ENCODE measurements at regions of chr21 and their contacts with region 1.

Region 1: DNA sequence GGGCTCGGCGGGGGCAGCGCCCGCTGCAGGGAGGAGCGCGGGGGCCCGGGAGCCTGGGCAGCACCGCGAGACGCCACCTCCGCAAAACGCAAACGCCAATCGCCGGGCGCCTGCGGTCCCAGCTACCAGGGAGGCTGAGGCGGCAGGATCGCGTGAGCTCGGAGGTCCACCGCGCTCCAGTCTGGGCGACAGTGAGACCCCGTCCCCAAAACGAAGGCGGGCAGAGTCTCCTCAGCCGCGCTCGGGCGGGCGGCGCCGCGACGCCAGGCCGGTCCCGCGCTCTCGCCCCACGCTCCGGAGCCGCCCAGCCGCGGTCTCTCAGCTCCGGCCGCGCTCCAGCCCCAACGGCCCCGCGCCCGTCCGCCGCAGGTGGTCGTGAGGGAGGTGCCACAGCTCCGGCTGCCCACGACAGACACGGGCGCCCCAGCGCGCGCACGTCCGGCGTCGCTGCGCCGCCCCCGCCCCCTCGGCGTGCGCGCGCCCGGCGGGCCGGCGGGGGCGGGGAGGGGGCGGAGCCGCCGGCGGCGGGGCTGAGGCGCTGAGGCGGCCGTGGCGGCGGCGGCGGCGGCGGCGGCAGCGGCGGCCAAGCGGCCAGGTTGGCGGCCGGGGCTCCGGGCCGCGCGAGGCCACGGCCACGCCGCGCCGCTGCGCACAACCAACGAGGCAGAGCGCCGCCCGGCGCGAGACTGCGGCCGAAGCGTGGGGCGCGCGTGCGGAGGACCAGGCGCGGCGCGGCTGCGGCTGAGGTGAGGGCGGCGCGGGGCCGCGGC is at the start of gene ADARB1:
- DNase-seq: peak in 4 of 5 donors; percentile 65 to 79 (median 72)
- H3K4me3 ChIP-seq: peak within 1 kb of the TSS; percentile 18 to 52
- H3K4me3 Mint-ChIP-seq: peak within 1 kb of the TSS; percentile 92 to 99 (median 96)
- H3K27ac ChIP-seq: peak within 1 kb of the TSS; percentile 64
- H3K27ac Mint-ChIP-seq: peak within 1 kb of the TSS; percentile 92 to 99 (median 97)
- H3K4me1 ChIP-seq: peaks cover 44% of the 10 kb centered on the region
- H3K4me1 Mint-ChIP-seq: peaks cover 33 to 46% (median 39%) of the 10 kb centered on the region in 4 donors
- H3K27me3 ChIP-seq: no peaks in the 10 kb centered on the region
- H3K27me3 Mint-ChIP-seq: no peaks in the 10 kb centered on the region
- total RNA-seq, gene ADARB1: 49.7 to 50.0 TPM

Region 2: DNA sequence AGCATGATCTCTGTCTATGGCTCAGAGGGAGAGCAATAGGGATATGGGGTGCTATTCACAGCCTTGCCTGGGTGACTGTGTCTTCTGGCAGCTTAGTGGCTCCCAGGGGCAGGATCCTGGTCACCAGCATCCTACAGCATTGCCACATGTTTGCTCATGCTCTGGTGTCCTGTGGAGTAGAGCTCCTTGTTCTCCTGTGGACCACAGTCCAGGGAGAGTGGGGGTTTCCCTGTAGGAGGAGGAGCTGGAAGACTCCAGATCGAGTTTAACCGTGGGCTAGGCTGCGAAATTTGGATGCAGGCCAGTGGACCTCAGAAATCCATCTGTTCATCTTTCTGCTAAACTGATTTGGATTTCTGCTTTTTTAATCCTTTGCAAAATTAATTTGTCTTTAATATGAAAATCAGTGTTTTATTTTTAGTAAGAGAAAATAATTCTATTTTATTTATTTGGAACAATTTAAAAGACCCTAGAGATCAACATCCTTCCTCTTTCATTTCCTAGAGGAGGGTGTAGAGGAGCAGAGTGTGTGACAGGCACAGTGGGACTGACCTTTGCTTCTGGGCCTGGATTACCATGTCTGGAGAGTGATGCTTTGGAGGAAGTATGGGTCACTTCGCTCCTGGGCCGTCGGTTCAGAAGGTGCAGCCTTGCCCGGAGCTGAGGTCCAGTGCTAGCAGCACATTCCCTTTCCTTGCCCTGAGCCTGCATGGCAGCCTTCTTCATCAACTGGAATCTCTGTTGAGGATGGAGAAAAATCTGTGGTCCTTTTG is 17.5 kb after region 1 on chr21:
- CTCF ChIA-PET with region 1: interaction called, 3 read pairs
- POLR2A ChIA-PET with region 1: interaction called, 11 read pairs
- intact Hi-C with region 1: no loop called
- DNase-seq: no peak
- H3K4me3 ChIP-seq: no peak overlapping the region
- H3K4me3 Mint-ChIP-seq: no peak overlapping the region
- H3K27ac ChIP-seq: no peak overlapping the region
- H3K27ac Mint-ChIP-seq: peak overlapping the region in 1 of 7 donors; percentile 36
- H3K4me1 ChIP-seq: peaks cover 48% of the 10 kb centered on the region
- H3K4me1 Mint-ChIP-seq: peaks cover 46 to 77% (median 60%) of the 10 kb centered on the region in 4 donors
- H3K27me3 ChIP-seq: no peaks in the 10 kb centered on the region
- H3K27me3 Mint-ChIP-seq: no peaks in the 10 kb centered on the region

Region 3: GRCh38 chr21:45102391-45102932 is 28.2 kb after region 1 on chr21:
- CTCF ChIA-PET with region 1: interaction called, 9 read pairs
- POLR2A ChIA-PET with region 1: interaction called, 12 read pairs
- intact Hi-C with region 1: no loop called
- DNase-seq: no peak
- H3K4me3 ChIP-seq: no peak overlapping the region
- H3K4me3 Mint-ChIP-seq: peak overlapping the region in 3 of 8 donors; percentile 15 to 26 (median 25)
- H3K27ac ChIP-seq: no peak overlapping the region
- H3K27ac Mint-ChIP-seq: peak overlapping the region in 1 of 7 donors; percentile 43
- H3K4me1 ChIP-seq: peaks cover 43% of the 10 kb centered on the region
- H3K4me1 Mint-ChIP-seq: peaks cover 50 to 78% (median 63%) of the 10 kb centered on the region in 4 donors
- H3K27me3 ChIP-seq: no peaks in the 10 kb centered on the region
- H3K27me3 Mint-ChIP-seq: no peaks in the 10 kb centered on the region

Region 4: DNA sequence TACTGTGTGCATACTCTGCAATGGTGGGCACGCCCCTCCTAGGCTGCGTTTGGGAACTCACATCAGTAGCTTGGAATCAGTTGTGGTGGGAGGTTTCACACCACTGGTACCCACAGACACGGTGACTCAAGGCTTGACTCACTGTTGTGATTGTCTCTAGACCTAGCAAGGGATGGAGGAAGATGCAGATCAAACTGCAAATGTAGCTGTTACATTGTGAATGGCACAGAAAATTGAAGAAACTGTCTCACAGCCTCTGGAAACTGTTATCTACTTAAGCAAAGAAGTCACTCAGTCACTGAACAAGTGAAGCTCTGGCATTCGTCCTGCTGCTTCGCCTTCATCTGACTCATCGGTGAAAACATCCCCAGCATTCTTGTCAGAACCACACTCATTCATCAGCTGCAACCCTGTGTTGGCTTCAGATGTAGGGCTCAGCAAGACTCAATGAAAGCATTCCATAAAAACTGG is 154.0 kb after region 1 on chr21:
- CTCF ChIA-PET with region 1: no interaction called
- POLR2A ChIA-PET with region 1: no interaction called
- intact Hi-C with region 1: no loop called
- DNase-seq: peak; percentile 70 to 93 (median 76)
- H3K4me3 ChIP-seq: no peak overlapping the region
- H3K4me3 Mint-ChIP-seq: peak overlapping the region in 6 of 8 donors; percentile 26 to 74 (median 64)
- H3K27ac ChIP-seq: no peak overlapping the region
- H3K27ac Mint-ChIP-seq: peak overlapping the region in 6 of 7 donors; percentile 80 to 93 (median 88)
- H3K4me1 ChIP-seq: peaks cover 48% of the 10 kb centered on the region
- H3K4me1 Mint-ChIP-seq: peaks cover 39 to 61% (median 49%) of the 10 kb centered on the region in 4 donors
- H3K27me3 ChIP-seq: no peaks in the 10 kb centered on the region
- H3K27me3 Mint-ChIP-seq: peaks cover 0 to 2% of the 10 kb centered on the region in 2 donors